ENCODE measurements at regions of chr10 and their contacts with region 1.

Region 1: DNA sequence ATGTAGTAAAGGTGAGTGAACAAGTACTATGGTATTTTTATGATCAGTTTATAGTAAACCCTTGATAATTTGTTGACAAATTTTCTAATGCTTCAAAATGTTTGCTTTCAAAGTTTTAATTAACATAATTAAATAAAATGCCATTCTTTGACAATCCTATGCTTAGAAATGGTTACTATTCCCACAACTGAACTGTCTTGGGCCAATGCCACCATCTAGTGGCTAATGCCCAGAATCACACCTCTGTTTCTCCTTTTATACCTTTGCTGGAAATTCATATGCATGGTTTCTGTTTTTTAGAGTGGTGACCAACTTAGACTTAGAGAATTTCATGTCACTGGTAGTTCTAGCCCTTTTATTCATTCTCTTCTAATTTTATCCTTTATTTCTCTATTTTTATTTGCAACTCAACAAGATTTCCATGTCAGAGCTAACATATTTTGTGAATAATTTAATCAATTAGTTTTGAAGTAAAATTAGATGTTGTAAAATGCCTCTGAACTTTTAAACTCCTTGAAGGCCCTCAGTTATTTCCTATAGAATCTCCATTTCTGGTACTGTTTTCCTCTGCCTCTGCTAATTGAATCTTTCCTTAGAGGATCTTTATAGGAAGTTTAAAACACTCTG is 31.1 kb downstream of the PCGF5 start:
- DNase-seq: peak in 1 of 2 donors; percentile 45
- ATAC-seq: peak in 7 of 8 donors; percentile 59 to 83 (median 70)
- H3K4me3 ChIP-seq: no peak overlapping the region
- H3K27ac ChIP-seq: no peak overlapping the region
- H3K4me1 ChIP-seq: peaks cover 0 to 27% (median 12%) of the 10 kb centered on the region in 9 donors
- H3K27me3 ChIP-seq: no peaks in the 10 kb centered on the region
- CTCF ChIP-seq: peak; percentile 85 to 97 (median 94)

Region 2: DNA sequence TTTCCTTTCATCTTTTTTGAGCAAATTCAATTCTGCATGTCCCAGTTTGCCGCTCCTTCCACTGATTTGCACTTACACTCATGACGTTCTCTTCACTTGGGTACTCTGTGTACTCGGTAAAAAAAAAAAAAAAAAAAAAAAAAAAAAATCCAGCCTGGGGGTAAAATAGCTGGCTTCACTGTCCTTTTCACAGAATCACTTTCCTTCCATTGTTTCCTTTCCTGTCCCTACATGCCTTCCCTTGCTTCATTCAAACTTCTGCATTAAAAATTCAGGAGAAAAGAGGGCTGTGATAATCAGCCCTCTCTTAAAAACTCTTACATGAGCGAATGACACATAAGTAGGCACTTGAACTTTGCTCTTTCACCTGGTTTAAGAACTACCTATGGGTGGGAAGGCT is 339.4 kb before region 1 on chr10:
- intact Hi-C with region 1: loop called (anchors 1 to 10 kb)
- DNase-seq: no peak
- ATAC-seq: peak in 2 of 8 donors; percentile 3 to 6
- H3K4me3 ChIP-seq: no peak overlapping the region
- H3K27ac ChIP-seq: peak overlapping the region in 4 of 10 donors; percentile 6 to 27 (median 22)
- H3K4me1 ChIP-seq: peaks cover 0 to 9% (median 0%) of the 10 kb centered on the region in 9 donors
- H3K27me3 ChIP-seq: no peaks in the 10 kb centered on the region
- CTCF ChIP-seq: no peak

Region 3: DNA sequence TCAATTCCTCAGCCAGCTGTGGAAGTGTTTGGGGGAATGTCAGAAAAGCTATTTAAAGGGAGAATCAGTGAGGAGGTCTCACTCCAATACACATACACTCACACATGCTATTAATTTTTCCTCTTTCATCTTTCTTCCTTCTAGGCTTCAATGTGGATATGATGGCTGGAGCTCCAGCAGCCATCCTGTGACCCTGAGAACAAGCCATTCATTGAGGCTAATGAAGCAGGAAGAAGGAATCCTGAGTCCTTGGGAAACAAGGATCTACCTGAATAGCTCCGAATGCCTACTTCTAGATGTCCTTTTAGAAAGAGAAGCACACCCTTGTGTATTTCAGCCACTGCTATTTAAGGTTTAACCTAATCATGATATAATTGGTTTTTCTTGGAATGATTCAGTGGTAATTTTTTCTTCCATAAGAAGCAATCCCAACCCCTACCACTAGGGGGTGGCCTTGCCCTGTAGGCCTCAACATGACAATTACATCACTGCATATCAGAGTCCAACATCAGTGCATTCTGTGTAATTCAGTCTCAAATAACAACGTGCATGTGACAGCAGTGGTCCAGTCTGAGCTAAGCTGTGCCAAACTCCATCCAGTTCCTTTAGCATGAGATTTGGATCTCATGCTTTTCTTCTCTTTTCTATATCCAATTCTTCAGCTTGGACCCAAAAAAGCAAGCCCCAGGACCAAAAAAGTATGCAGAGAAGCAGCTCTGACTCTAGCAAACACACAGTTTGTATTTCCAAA is 245.4 kb before region 1 on chr10:
- intact Hi-C with region 1: loop called in 8 of 10 experiments (anchors 1 to 10 kb)
- DNase-seq: peak in 1 of 2 donors; percentile 51
- ATAC-seq: peak; percentile 66 to 90 (median 80)
- H3K4me3 ChIP-seq: no peak overlapping the region
- H3K27ac ChIP-seq: peak overlapping the region in 5 of 10 donors; percentile 35 to 57 (median 42)
- H3K4me1 ChIP-seq: peaks cover 0 to 21% (median 13%) of the 10 kb centered on the region in 9 donors
- H3K27me3 ChIP-seq: no peaks in the 10 kb centered on the region
- CTCF ChIP-seq: peak; percentile 88 to 96 (median 92)

Region 4: DNA sequence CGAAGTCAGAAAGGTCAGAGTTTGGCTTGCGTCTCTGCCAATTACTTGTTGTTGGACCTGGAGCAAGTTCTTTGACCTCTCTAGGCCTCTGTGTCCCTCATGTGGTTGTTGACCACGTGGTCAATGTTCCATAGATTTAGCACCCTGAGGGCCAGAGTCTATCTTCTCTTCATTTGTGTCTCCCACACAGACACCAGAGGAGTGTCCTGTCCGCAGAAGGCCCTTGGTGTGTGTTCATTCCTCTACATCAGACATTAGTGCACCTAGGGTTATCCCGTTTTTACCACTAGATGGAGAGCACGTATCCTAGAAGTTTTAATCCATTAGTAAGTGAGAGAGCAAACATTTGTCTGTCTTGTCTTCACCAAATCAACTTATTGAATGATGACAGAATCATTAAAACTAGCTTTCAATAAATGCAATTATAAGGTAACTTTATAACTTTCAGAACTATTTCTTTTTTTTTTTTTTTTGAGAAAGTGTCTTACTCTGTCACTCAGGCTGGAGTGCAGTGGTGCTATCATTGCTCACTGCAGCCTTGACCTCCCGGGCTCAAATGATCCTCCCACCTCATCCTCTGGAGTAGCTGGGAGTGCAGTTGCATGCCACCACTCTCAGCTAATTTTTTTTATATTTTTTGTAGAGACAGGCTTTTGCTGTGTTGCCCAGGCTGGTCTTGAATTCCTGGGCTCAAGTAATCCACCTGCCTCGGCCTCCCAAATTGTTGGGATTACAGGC is 208.2 kb before region 1 on chr10:
- intact Hi-C with region 1: loop called in 9 of 10 experiments (anchors 2 to 10 kb)
- DNase-seq: peak in 1 of 2 donors; percentile 22
- ATAC-seq: peak; percentile 58 to 90 (median 84)
- H3K4me3 ChIP-seq: no peak overlapping the region
- H3K27ac ChIP-seq: no peak overlapping the region
- H3K4me1 ChIP-seq: peaks cover 0 to 22% (median 0%) of the 10 kb centered on the region in 9 donors
- H3K27me3 ChIP-seq: no peaks in the 10 kb centered on the region
- CTCF ChIP-seq: peak; percentile 15 to 69 (median 50)

Region 5: GRCh38 chr10:91163269-91163868 is 88.2 kb before region 1 on chr10:
- intact Hi-C with region 1: loop called in 2 of 10 experiments (anchors 5 to 10 kb)
- DNase-seq: peak; percentile 67 to 73
- ATAC-seq: peak; percentile 51 to 77 (median 63)
- H3K4me3 ChIP-seq: peak overlapping the region; percentile 62 to 99 (median 92)
- H3K27ac ChIP-seq: peak overlapping the region; percentile 94 to 99 (median 98)
- H3K4me1 ChIP-seq: peaks cover 3 to 42% (median 13%) of the 10 kb centered on the region in 9 donors
- H3K27me3 ChIP-seq: peaks cover 0 to 8% (median 0%) of the 10 kb centered on the region in 7 donors
- CTCF ChIP-seq: peak in 2 of 9 donors; percentile 22 to 33

Region 6: DNA sequence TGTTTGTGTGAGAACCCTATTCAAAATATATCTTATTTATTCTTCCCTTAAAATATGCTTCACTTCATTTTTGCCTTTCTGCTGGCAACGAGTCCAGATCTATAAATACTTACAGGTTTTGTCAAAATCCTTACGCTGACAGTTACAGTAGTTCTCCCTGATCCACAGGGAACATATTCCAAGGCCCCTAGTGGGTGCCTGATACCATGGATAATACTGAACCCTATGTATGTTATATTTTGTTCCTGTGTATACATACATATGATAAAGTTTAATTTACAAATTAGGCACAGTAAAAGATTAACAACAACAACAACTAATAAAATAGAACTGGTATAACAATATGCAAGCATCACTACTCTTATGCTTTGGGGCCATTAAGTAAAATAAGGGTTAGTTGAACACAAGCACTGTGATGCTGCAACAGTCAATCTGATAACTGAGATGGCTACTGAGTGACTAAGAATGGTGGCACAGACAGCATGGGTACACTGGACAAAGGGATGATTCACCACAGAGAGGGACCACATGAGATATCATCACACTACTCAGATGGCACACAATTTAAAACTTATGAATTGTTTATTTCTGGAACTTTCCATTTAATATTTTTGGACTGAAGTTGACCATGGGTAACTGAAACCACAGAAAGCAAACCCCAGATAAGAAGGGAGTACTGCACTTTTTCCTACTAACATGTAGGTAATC is 60.5 kb before region 1 on chr10:
- intact Hi-C with region 1: no loop called
- DNase-seq: no peak
- ATAC-seq: peak in 2 of 8 donors; percentile 30 to 55
- H3K4me3 ChIP-seq: no peak overlapping the region
- H3K27ac ChIP-seq: peak overlapping the region in 3 of 10 donors; percentile 15 to 45 (median 33)
- H3K4me1 ChIP-seq: peaks cover 0 to 63% (median 34%) of the 10 kb centered on the region in 9 donors
- H3K27me3 ChIP-seq: no peaks in the 10 kb centered on the region
- CTCF ChIP-seq: no peak

Measured in heart right ventricle (tissue), 16 donors.